HCT116 (cell line): ENCODE measurements at regions of chr12 and their contacts with region 1.

Region 1: DNA sequence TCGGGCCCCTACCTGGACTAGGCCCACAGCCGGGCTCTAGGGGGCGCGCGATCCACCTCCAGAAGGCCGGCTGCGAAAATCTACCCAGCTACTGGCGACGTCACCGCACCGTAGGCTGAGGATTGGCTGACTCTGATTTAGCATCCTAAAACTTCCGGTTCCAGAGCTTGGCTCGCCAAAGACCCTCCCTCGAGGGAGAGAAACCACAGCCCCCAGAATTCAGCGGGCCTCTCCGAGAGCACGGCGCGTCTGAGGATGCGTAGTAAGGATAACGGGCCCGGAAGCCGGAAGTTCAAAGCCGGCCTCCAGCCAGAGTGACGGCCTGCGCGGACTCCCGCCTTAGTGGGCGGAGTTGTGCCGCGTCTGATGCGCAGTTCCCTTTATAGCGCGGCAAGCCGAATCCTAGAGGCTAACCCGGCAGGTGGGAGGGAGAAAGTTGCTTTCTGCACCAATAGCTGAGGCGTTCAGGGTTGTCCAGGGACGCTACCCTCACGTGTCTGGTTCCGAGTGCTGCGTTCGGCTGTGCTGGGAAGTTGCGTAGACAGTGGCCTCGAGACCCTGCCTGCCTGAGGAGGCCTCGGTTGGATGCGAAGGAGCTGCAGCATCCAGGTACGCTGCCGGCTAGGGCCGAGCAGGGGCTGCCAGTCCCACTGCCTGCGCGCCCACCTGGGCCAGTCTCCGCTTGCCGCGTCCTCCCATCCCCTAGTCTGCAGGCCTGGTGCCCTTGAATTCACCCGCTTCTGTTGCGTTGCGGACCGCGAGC is at the start of gene COX14:
- DNase-seq: peak; percentile 99
- ATAC-seq: peak; percentile 90
- H3K4me3 ChIP-seq: peak within 1 kb of the TSS; percentile 93 to 99
- H3K27ac ChIP-seq: peak within 1 kb of the TSS; percentile 77
- H3K4me1 ChIP-seq: peaks cover 20 to 22% of the 10 kb centered on the region in 2 experiments
- H3K27me3 ChIP-seq: no peaks in the 10 kb centered on the region
- CTCF ChIP-seq: peak; percentile 83 to 94 (median 91); a peak in 5 of 6 replicates
- POLR2A ChIP-seq: peak; percentile 78
- RAD21 ChIP-seq: peak; percentile 70
- total RNA-seq, gene COX14: 41.0 TPM

Region 2: DNA sequence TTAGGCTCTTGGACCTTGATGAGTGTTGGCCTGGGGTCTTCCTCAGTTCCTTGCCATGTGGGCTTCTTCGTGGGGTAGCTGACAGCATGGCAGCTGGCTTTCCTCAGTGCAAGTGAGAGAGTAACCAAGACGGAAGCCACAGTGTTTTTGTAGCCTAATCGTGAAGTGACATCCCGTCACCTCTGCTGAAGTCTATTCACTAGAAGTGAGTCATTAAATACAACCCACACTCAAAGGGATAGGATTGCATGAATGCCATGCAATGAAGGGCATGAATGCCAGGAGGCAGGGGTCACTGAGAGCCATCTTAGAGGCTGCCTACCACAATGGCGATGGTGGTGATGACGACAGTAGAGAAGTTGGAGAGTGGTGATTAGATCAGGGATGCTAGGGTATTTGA is 68.0 kb before region 1 on chr12:
- CTCF ChIA-PET with region 1: no interaction called
- POLR2A ChIA-PET with region 1: no interaction called
- RAD21 ChIA-PET with region 1: no interaction called
- intact Hi-C with region 1: no loop called
- DNase-seq: no peak
- ATAC-seq: no peak
- H3K4me3 ChIP-seq: no peak overlapping the region
- H3K27ac ChIP-seq: no peak overlapping the region
- H3K4me1 ChIP-seq: peaks cover 0 to 8% of the 10 kb centered on the region in 2 experiments; a peak in 2 of 4 replicates
- H3K27me3 ChIP-seq: no peaks in the 10 kb centered on the region
- CTCF ChIP-seq: no peak
- POLR2A ChIP-seq: no peak
- RAD21 ChIP-seq: no peak

Region 3: GRCh38 chr12:50084775-50085614 is 26.9 kb before region 1 on chr12 and contains the start of gene SMARCD1:
- CTCF ChIA-PET with region 1: interaction called, 33 read pairs
- POLR2A ChIA-PET with region 1: interaction called, 20 read pairs
- RAD21 ChIA-PET with region 1: interaction called in 1 of 2 experiments, 6 read pairs
- intact Hi-C with region 1: no loop called
- DNase-seq: peak; percentile 81
- ATAC-seq: peak; percentile 89
- H3K4me3 ChIP-seq: peak within 1 kb of the TSS; percentile 70 to 77
- H3K27ac ChIP-seq: peak within 1 kb of the TSS; percentile 59
- H3K4me1 ChIP-seq: peaks cover 5 to 21% of the 10 kb centered on the region in 2 experiments
- H3K27me3 ChIP-seq: no peaks in the 10 kb centered on the region
- CTCF ChIP-seq: peak; percentile 45 to 60 (median 56); a peak in 4 of 6 replicates
- POLR2A ChIP-seq: peak; percentile 50
- RAD21 ChIP-seq: no peak
- total RNA-seq, gene SMARCD1: 64.8 TPM

Region 4: DNA sequence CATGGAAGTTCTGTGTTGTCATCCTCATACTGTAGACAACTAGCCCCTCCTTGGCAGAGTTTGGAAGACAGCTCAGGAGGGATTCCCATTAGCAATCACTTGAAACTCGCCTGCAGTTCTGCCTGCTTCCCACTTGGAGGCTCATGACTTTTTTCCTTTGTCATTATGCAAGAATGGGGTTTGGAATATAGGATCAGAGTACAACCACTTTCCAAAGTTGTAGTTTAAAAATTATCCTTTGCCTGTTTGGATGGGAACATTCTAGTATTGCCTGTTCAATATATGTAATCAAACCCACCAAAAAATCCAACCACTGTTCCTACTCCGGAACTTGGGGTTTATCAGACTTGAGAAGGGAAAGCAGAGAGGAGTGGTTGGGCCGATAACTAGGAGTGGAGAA is 10.2 kb before region 1 on chr12:
- CTCF ChIA-PET with region 1: interaction called, 24 read pairs
- POLR2A ChIA-PET with region 1: interaction called, 7 read pairs
- RAD21 ChIA-PET with region 1: no interaction called
- intact Hi-C with region 1: no loop called
- DNase-seq: peak; percentile 27
- ATAC-seq: peak; percentile 48
- H3K4me3 ChIP-seq: no peak overlapping the region
- H3K27ac ChIP-seq: no peak overlapping the region
- H3K4me1 ChIP-seq: peaks cover 10 to 13% of the 10 kb centered on the region in 2 experiments
- H3K27me3 ChIP-seq: no peaks in the 10 kb centered on the region
- CTCF ChIP-seq: peak; percentile 46 to 60 (median 53); a peak in 5 of 6 replicates
- POLR2A ChIP-seq: no peak
- RAD21 ChIP-seq: peak; percentile 48

Region 5: DNA sequence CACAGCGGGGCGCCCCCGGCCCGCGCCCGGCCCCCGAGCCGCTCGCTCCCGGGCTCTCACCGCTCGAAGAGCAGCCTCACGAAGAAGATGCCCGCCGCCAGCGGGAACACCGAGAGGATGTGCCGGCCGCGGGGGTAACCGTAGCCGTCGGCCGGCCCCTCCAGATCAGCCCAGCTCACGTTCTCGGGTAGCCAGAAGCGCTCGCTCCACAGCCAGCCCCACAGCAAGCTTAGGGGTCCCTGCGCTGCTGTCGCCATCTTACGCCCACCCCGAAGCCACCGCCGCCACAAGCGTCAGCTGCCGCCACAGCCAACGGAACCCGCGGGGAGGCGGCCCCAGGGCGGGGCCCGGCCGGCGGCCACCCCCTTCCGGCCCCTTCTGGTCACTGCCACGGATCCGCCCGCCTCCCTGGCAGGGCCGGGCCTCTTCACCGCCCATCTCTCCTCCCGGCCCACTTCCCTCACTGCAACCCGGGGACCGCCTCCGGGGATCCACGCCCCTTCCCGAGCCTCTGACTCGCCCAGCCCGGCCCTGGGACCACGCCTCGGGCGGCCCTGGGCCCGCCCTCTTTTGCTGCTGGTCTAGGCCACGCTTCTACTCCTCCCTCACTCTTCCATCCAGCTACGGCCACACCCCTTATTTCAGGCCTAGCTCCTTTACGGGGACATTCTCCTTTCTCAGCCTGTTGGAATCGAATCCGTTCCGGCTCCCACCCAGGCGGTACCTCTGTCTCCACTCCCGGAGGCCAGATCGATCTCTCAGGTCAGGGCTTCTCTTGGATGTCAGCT is 55.4 kb after region 1 on chr12 and contains the start of gene CERS5:
- CTCF ChIA-PET with region 1: interaction called, 17 read pairs
- POLR2A ChIA-PET with region 1: interaction called, 18 read pairs
- RAD21 ChIA-PET with region 1: interaction called in 1 of 2 experiments, 6 read pairs
- intact Hi-C with region 1: loop called (anchors 2 kb)
- DNase-seq: peak; percentile 96
- ATAC-seq: peak; percentile 98
- H3K4me3 ChIP-seq: peak within 1 kb of the TSS; percentile 83 to 93
- H3K27ac ChIP-seq: peak within 1 kb of the TSS; percentile 77
- H3K4me1 ChIP-seq: peaks cover 11 to 29% of the 10 kb centered on the region in 2 experiments; a peak in 3 of 4 replicates
- H3K27me3 ChIP-seq: no peaks in the 10 kb centered on the region
- CTCF ChIP-seq: 0 out of 6 replicates have a peak, but pooled peaks of 1 of the 3 experiments have one; percentile 10
- POLR2A ChIP-seq: peak; percentile 58
- RAD21 ChIP-seq: no peak
- total RNA-seq, gene CERS5: 33.4 TPM